CD4-positive, alpha-beta T cell (primary cell): ENCODE measurements at regions of chr11 and their contacts with region 1.

Region 1: GRCh38 chr11:77066229-77067042 is at the start of gene CAPN5:
- DNase-seq: peak; percentile 71 to 94 (median 82)
- ATAC-seq: peak; percentile 90
- H3K4me3 ChIP-seq: peak within 1 kb of the TSS; percentile 69
- H3K4me3 Mint-ChIP-seq: peak within 1 kb of the TSS; percentile 92
- H3K27ac ChIP-seq: peak within 1 kb of the TSS in 1 of 2 donors; percentile 39
- H3K27ac Mint-ChIP-seq: peak within 1 kb of the TSS; percentile 71
- H3K4me1 ChIP-seq: peaks cover 19% of the 10 kb centered on the region
- H3K4me1 Mint-ChIP-seq: peaks cover 16% of the 10 kb centered on the region
- H3K27me3 ChIP-seq: no peaks in the 10 kb centered on the region
- H3K27me3 Mint-ChIP-seq: no peaks in the 10 kb centered on the region
- CTCF ChIP-seq: no peak
- total RNA-seq, gene CAPN5: 5.1 to 6.9 TPM

Region 2: GRCh38 chr11:77091146-77091940 is 24.9 kb after region 1 on chr11:
- CTCF ChIA-PET with region 1: interaction called, 8 read pairs
- POLR2A ChIA-PET with region 1: interaction called, 6 read pairs
- intact Hi-C with region 1: loop called (anchors 1 kb)
- DNase-seq: peak; percentile 65 to 86 (median 74)
- ATAC-seq: peak; percentile 99
- H3K4me3 ChIP-seq: no peak overlapping the region
- H3K4me3 Mint-ChIP-seq: no peak overlapping the region
- H3K27ac ChIP-seq: no peak overlapping the region
- H3K27ac Mint-ChIP-seq: no peak overlapping the region
- H3K4me1 ChIP-seq: peaks cover 7% of the 10 kb centered on the region
- H3K4me1 Mint-ChIP-seq: peaks cover 5% of the 10 kb centered on the region
- H3K27me3 ChIP-seq: no peaks in the 10 kb centered on the region
- H3K27me3 Mint-ChIP-seq: no peaks in the 10 kb centered on the region
- CTCF ChIP-seq: peak; percentile 89

Region 3: GRCh38 chr11:77473801-77474683 is 407.6 kb after region 1 on chr11 and contains the start of gene PAK1:
- CTCF ChIA-PET with region 1: no interaction called
- POLR2A ChIA-PET with region 1: no interaction called
- intact Hi-C with region 1: loop called in 1 of 2 experiments (anchors 10 kb)
- DNase-seq: peak; percentile 61 to 99 (median 85)
- ATAC-seq: peak; percentile 73
- H3K4me3 ChIP-seq: peak within 1 kb of the TSS; percentile 64
- H3K4me3 Mint-ChIP-seq: peak within 1 kb of the TSS; percentile 97
- H3K27ac ChIP-seq: peak within 1 kb of the TSS in 1 of 2 donors; percentile 29
- H3K27ac Mint-ChIP-seq: peak within 1 kb of the TSS; percentile 96
- H3K4me1 ChIP-seq: peaks cover 14% of the 10 kb centered on the region
- H3K4me1 Mint-ChIP-seq: peaks cover 25% of the 10 kb centered on the region
- H3K27me3 ChIP-seq: peaks cover 2 to 5% of the 10 kb centered on the region in 2 experiments
- H3K27me3 Mint-ChIP-seq: peaks cover 10% of the 10 kb centered on the region
- CTCF ChIP-seq: no peak
- total RNA-seq, gene PAK1: 6.9 to 12.6 TPM